Sigmoid colon (tissue), 7 donors: ENCODE measurements at regions of chr5 and their contacts with region 1.

Region 1: DNA sequence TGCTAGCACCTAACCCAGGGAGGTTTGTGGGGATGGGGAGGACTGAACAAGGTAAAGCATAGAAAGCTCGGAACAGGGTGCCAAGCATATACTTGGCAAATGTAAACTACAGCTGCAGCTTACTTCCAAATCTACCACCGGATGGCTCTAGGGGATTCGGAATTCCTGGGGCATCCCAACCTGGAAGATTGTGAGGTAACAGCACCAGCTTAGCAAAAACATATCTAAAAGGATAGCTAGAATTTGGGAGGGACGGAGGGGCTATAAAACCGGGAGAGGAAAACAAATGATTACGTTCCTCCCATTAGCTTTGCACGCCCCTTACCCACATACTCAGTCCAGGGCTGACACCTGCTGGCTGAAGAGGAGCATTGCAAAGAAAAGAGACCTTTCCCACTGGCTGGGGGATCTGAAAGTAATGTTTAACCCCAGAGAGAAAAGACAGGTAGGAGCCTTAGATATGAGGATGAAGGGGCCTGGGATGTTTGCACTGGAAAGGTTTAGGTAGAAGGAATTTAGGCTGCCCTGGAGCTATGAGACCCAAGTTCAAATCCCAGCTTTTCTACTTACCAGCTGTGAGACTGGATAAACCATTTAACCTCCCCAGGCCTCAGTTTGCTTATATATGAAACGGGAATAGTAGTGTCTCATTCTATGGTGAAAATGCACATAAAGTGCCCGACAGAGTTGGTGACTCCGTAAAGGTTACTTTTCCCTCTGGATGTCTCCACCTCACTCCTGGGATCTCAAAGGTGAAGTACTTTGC is 73.6 kb downstream of the FAM114A2 start:
- DNase-seq: peak; percentile 72
- H3K4me3 ChIP-seq: no peak overlapping the region
- H3K27ac ChIP-seq: no peak overlapping the region
- H3K4me1 ChIP-seq: no peaks in the 10 kb centered on the region
- H3K27me3 ChIP-seq: no peaks in the 10 kb centered on the region
- CTCF ChIP-seq: peak; percentile 20 to 88 (median 78)
- EP300 ChIP-seq: no peak
- POLR2A ChIP-seq: no peak

Region 2: GRCh38 chr5:152532714-152533113 is 1432.3 kb before region 1 on chr5:
- intact Hi-C with region 1: loop called (anchors 1 kb)
- DNase-seq: no peak
- H3K4me3 ChIP-seq: no peak overlapping the region
- H3K27ac ChIP-seq: no peak overlapping the region
- H3K4me1 ChIP-seq: no peaks in the 10 kb centered on the region
- H3K27me3 ChIP-seq: no peaks in the 10 kb centered on the region
- CTCF ChIP-seq: peak; percentile 6 to 41 (median 36)
- EP300 ChIP-seq: no peak
- POLR2A ChIP-seq: no peak

Region 3: DNA sequence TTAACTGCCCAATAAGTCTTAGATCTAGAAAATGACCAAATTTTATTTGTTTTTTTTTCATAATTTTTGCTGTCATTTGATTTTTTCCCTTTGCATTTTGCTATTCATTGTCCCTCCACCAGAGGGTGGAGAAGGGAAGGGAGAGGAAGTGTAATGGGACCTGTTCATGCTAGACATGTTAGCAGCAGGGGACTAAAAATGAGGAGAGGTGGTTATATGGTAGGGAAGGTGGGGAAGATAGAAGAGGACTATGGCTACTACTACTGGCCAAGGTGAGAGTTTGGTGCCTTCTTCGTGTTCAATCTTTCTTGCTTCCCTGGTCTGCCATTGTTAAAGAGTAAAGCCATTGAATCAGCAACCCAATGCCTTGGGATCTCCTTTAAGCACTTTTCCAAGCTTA is 468.2 kb before region 1 on chr5:
- intact Hi-C with region 1: loop called (anchors 5 kb)
- DNase-seq: no peak
- H3K4me3 ChIP-seq: no peak overlapping the region
- H3K27ac ChIP-seq: no peak overlapping the region
- H3K4me1 ChIP-seq: no peaks in the 10 kb centered on the region
- H3K27me3 ChIP-seq: peaks cover 0 to 6% (median 0%) of the 10 kb centered on the region in 3 donors
- CTCF ChIP-seq: peak in 2 of 4 experiments; percentile 17 to 26
- EP300 ChIP-seq: no peak
- POLR2A ChIP-seq: no peak

Region 4: GRCh38 chr5:154405078-154405792 is 440.2 kb after region 1 on chr5:
- intact Hi-C with region 1: no loop called
- DNase-seq: peak; percentile 90
- H3K4me3 ChIP-seq: peak overlapping the region in 3 of 4 donors; percentile 17 to 46 (median 38)
- H3K27ac ChIP-seq: peak overlapping the region in 1 of 4 donors; percentile 32
- H3K4me1 ChIP-seq: peaks cover 0 to 16% (median 12%) of the 10 kb centered on the region in 4 donors
- H3K27me3 ChIP-seq: no peaks in the 10 kb centered on the region
- CTCF ChIP-seq: peak; percentile 80 to 91 (median 81)
- EP300 ChIP-seq: no peak
- POLR2A ChIP-seq: no peak